ENCODE measurements at regions of chr1 and their contacts with region 1.

Region 1: GRCh38 chr1:147545133-147545532 is 3.8 kb downstream of the BCL9 start:
- DNase-seq: peak; percentile 52 to 56
- H3K4me3 ChIP-seq: peak overlapping the region in 1 of 4 experiments; percentile 35; a peak in 1 of 8 replicates
- H3K27ac ChIP-seq: no peak overlapping the region
- H3K4me1 ChIP-seq: peaks cover 4 to 17% (median 12%) of the 10 kb centered on the region in 4 experiments; a peak in 6 of 7 replicates
- H3K27me3 ChIP-seq: no peaks in the 10 kb centered on the region
- CTCF ChIP-seq: no peak
- EP300 ChIP-seq: no peak
- POLR2A ChIP-seq: no peak
- RAD21 ChIP-seq: no peak

Region 2: DNA sequence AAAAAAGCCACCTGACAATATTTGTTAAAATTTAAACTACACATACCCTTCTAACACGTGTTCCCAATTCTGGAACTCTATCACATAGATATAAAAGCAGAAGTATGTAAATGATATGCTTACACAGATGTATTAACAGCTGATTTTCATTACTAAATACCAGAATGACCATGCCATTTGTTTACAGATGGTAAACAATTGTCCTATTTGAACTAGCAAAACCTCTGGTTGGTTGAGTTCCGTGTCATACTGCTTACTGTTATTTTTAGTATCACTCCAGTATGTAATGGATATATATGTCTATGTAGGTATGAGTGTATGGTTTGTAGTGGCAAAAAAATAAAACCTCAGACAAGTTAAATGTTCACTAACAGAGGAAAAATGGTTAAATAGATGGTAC is 231.9 kb before region 1 on chr1:
- CTCF ChIA-PET with region 1: no interaction called
- POLR2A ChIA-PET with region 1: no interaction called
- DNase-seq: no peak
- H3K4me3 ChIP-seq: no peak overlapping the region
- H3K27ac ChIP-seq: no peak overlapping the region
- H3K4me1 ChIP-seq: no peaks in the 10 kb centered on the region
- H3K27me3 ChIP-seq: no peaks in the 10 kb centered on the region; a peak in 1 of 7 replicates
- CTCF ChIP-seq: no peak
- EP300 ChIP-seq: no peak
- POLR2A ChIP-seq: no peak
- RAD21 ChIP-seq: no peak

Region 3: GRCh38 chr1:147527941-147528936 is 16.9 kb before region 1 on chr1:
- CTCF ChIA-PET with region 1: interaction called, 3 read pairs
- POLR2A ChIA-PET with region 1: interaction called, 10 read pairs
- DNase-seq: no peak
- H3K4me3 ChIP-seq: no peak overlapping the region
- H3K27ac ChIP-seq: no peak overlapping the region
- H3K4me1 ChIP-seq: no peaks in the 10 kb centered on the region
- H3K27me3 ChIP-seq: no peaks in the 10 kb centered on the region
- CTCF ChIP-seq: no peak
- EP300 ChIP-seq: no peak
- POLR2A ChIP-seq: no peak
- RAD21 ChIP-seq: no peak

Region 4: DNA sequence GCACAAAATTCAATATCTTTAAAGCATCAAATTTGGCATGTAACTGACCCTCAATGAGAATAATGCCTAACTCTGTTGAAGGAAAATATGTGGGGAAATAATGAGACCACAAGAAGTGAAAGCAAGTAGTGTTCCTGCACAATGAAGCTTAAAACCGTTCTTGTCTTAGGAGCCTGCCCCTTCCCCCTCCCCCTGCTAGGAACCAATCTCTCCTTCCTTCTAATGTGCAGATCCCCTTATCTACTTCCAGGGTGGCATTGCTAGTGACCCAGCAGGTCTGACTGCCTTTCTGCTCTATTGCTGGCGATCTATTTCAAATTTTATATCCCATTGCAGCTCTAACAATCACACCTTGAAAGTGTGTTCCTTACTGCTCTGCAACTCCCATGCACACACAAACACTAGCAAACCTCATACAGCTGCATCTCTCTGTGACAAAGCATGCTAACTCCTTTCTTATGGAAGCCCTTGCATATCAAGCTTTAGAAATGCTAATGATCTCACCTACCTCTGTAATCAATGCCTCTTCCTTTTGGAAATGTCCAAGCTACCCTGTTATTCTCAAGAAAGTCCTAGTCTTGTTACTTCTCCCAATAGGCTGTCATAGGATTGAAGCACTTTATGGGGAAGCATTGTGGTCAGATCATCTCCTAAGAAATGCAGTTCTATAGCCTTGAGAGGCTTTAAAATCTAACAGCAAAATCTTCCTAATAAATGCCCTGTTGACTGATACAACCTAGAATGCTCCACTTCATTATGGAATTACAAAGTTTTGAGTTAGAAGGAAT is 22.7 kb after region 1 on chr1:
- CTCF ChIA-PET with region 1: interaction called, 7 read pairs
- POLR2A ChIA-PET with region 1: interaction called, 31 read pairs
- DNase-seq: peak in 1 of 2 experiments; percentile 49
- H3K4me3 ChIP-seq: peak overlapping the region in 3 of 4 experiments; percentile 22 to 50 (median 28); a peak in 6 of 8 replicates
- H3K27ac ChIP-seq: peak overlapping the region; percentile 62
- H3K4me1 ChIP-seq: peaks cover 2 to 16% (median 11%) of the 10 kb centered on the region in 4 experiments; a peak in 4 of 7 replicates
- H3K27me3 ChIP-seq: peaks cover 0 to under 1% (median 0%) of the 10 kb centered on the region in 4 experiments; a peak in 1 of 7 replicates
- CTCF ChIP-seq: no peak
- EP300 ChIP-seq: no peak
- POLR2A ChIP-seq: peak in 1 of 2 experiments; percentile 52; a peak in 1 of 3 replicates
- RAD21 ChIP-seq: no peak

Region 5: DNA sequence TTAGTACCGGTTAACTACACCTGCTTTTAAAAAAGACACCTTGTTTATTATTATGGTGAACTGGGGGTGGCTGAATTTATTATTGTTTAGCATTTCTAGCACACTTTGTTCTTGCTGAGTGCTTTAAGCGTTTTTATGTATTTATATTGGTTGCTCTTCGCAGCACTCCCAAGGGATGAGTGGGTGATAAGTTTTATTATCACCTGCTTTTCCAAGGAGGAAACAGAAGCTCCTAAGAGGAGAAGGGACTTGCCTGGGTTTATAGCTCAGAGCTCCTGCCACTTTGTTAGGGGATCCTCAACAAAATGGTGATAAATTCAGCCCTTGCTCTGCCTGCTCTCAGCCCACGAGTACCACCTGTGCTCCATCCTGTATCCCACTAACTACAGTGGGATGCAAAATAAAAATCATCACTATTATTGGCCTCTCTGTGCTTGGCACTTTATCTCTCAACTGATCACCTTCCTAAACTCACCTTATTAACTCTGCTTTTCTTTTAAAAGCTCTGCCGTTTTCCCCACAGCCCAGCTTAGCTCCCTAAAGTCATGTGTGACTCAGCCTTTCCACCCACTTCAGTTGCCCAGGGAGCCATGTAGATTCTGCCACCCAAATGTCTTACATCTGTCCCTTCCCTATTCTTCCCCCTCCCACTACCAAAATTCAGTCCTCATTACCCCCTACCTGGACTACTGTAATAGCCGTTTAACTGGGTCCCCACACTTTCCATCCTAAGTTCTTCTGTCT is 40.7 kb after region 1 on chr1:
- CTCF ChIA-PET with region 1: interaction called, 4 read pairs
- POLR2A ChIA-PET with region 1: interaction called, 23 read pairs
- DNase-seq: no peak
- H3K4me3 ChIP-seq: peak overlapping the region; percentile 14 to 60 (median 31); a peak in 5 of 8 replicates
- H3K27ac ChIP-seq: no peak overlapping the region
- H3K4me1 ChIP-seq: peaks cover 7 to 26% (median 13%) of the 10 kb centered on the region in 4 experiments
- H3K27me3 ChIP-seq: peaks cover 6 to 60% (median 52%) of the 10 kb centered on the region in 4 experiments
- CTCF ChIP-seq: no peak
- EP300 ChIP-seq: no peak
- POLR2A ChIP-seq: no peak
- RAD21 ChIP-seq: no peak

Region 6: DNA sequence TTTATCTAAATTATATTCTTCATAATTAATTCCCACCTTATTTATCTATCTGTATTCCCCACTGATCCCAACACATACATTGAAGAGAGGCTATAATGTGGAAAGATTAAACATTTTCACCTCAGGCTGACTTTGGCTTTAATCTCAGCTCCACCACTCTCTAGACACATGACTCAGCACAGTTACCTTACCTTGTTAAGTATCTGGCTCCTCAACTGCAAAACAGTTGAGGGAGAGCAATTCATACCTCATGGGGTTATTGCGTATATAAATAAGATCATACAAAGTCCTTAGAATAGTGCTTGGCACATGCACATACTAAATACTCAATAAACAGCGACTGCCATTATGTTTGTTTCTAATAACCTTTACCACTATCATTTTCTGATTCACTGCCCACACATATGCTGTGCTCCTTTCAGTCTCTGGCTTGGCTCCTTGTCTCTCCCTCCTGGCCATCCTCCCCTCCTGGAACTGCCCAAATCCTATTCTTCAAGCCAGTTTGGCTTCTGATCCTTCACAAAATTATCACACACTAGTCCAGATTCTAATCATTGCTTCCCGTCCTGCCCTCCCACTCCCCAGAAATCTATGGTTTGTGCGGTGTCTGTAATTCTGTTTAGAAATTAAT is 46.2 kb after region 1 on chr1:
- CTCF ChIA-PET with region 1: interaction called, 4 read pairs
- POLR2A ChIA-PET with region 1: interaction called, 70 read pairs
- DNase-seq: no peak
- H3K4me3 ChIP-seq: no peak overlapping the region
- H3K27ac ChIP-seq: no peak overlapping the region
- H3K4me1 ChIP-seq: peaks cover 6 to 16% (median 8%) of the 10 kb centered on the region in 4 experiments; a peak in 6 of 7 replicates
- H3K27me3 ChIP-seq: peaks cover 4 to 31% (median 29%) of the 10 kb centered on the region in 4 experiments
- CTCF ChIP-seq: no peak
- EP300 ChIP-seq: no peak
- POLR2A ChIP-seq: no peak
- RAD21 ChIP-seq: no peak

Region 7: DNA sequence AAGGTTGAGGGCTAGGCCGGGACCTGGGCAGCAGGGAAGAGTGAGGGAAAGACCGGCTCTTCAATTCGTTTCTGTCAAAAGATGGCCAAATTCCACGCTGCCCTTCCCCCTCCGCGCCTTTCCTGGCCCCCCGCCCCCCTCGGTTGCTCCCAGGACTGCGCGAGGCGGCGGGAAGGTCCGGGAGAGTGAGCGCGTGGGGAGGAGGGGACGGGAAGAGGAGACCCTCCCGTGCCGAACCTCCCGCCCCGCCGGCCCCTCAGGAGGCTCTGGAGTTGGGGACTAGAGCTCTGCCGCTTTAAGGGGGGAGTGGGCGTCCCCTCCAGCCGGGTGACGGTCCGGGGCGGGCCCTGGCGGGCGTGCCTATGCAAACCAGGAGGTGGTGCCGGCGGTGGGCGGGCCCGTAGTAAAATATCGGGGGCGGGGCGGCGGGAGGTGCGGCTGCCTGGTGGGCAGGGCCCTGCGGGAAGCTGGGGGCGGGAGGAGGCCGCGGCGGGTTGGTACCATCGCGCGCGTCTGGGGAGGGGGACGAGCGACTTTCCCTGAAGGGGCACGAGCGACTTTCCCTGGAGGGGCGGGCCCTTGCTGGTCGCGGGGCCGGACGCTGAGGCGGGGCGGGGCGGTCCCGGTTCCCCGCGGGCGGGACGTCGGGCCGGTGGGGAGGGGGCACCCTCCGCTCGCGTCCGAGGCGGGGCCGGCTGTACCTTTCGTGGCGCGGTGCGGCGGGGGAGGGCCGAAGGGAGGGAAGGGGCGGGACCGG is 54.4 kb after region 1 on chr1:
- CTCF ChIA-PET with region 1: interaction called, 9 read pairs
- POLR2A ChIA-PET with region 1: interaction called, 70 read pairs
- DNase-seq: peak; percentile 92 to 96
- H3K4me3 ChIP-seq: peak overlapping the region; percentile 60 to 91 (median 77)
- H3K27ac ChIP-seq: peak overlapping the region; percentile 68
- H3K4me1 ChIP-seq: peaks cover 2 to 16% (median 4%) of the 10 kb centered on the region in 4 experiments; a peak in 6 of 7 replicates
- H3K27me3 ChIP-seq: peaks cover 0 to 5% (median 3%) of the 10 kb centered on the region in 4 experiments; a peak in 3 of 7 replicates
- CTCF ChIP-seq: no peak
- EP300 ChIP-seq: peak in 1 of 2 experiments; percentile 43; a peak in 1 of 3 replicates
- POLR2A ChIP-seq: peak; percentile 93 to 95
- RAD21 ChIP-seq: peak in 1 of 2 experiments; percentile 18; a peak in 2 of 4 replicates